GM10248 (cell line): ENCODE measurements at regions of chr12 and their contacts with region 1.

Region 1: DNA sequence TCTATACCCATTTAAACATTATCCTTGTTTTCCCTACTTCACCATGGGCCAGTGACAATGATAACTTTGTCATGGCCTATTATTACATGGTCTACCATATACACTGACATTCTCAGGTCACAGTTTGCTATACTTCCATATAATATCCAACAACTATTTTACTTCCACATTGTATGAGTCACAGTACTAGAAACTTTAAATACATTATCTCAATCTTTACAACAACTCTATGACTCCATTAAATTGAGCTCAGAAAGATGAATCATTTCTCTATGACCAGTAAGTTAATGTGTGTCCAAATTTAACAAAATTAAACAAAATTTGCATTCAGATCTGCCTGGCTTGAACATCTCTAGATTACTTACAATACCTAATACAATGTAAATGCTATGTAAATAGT is 93.9 kb downstream of the PLEKHG7 start:
- DNase-seq: no peak
- CTCF ChIP-seq: no peak

Region 2: GRCh38 chr12:92784795-92785562 is 11.7 kb before region 1 on chr12:
- CTCF ChIA-PET with region 1: interaction called, 52 read pairs
- POLR2A ChIA-PET with region 1: no interaction called
- DNase-seq: peak; percentile 50
- CTCF ChIP-seq: peak; percentile 55